AG04449 (cell line): ENCODE measurements at regions of chr11 and their contacts with region 1.

Region 1: GRCh38 chr11:126989942-126990715 is 10.4 kb downstream of the KIRREL3 start:
- DNase-seq: no peak
- H3K4me3 ChIP-seq: peak overlapping the region; percentile 44
- CTCF ChIP-seq: peak; percentile 95

Region 2: GRCh38 chr11:126607374-126607773 is 382.8 kb before region 1 on chr11:
- CTCF ChIA-PET with region 1: interaction called, 79 read pairs
- POLR2A ChIA-PET with region 1: interaction called, 3 read pairs
- DNase-seq: peak; percentile 10
- H3K4me3 ChIP-seq: no peak overlapping the region
- CTCF ChIP-seq: peak; percentile 96

Region 3: GRCh38 chr11:126764231-126764630 is 225.9 kb before region 1 on chr11:
- CTCF ChIA-PET with region 1: interaction called, 13 read pairs
- POLR2A ChIA-PET with region 1: no interaction called
- DNase-seq: no peak
- H3K4me3 ChIP-seq: no peak overlapping the region
- CTCF ChIP-seq: no peak

Region 4: GRCh38 chr11:126815111-126815510 is 175.0 kb before region 1 on chr11:
- CTCF ChIA-PET with region 1: interaction called, 15 read pairs
- POLR2A ChIA-PET with region 1: interaction called, 3 read pairs
- DNase-seq: no peak
- H3K4me3 ChIP-seq: no peak overlapping the region
- CTCF ChIP-seq: no peak

Region 5: DNA sequence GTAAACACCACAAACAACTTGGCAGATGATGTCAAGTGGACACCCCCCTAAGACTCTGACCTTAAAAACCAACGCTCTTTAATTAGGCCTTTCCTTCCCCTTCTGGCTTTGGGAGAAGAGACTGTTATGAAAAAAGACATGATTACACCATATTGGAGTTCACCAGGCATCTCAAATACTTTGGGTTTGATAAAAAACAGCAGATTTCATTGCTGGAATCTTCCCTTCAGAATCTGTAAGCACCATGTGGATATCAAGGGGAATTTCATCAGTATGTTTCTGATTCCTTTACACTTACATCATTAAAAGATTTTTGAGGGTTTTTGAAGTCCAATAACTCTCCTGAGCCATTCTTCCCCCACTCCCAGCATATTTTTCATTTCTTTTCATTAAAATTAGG is 75.2 kb before region 1 on chr11:
- CTCF ChIA-PET with region 1: interaction called, 12 read pairs
- POLR2A ChIA-PET with region 1: no interaction called
- DNase-seq: peak; percentile 88
- H3K4me3 ChIP-seq: no peak overlapping the region
- CTCF ChIP-seq: no peak

Region 6: GRCh38 chr11:127003260-127003981 is 13.3 kb after region 1 on chr11:
- CTCF ChIA-PET with region 1: interaction called, 18 read pairs
- POLR2A ChIA-PET with region 1: interaction called, 3 read pairs
- DNase-seq: no peak
- H3K4me3 ChIP-seq: peak overlapping the region; percentile 62
- CTCF ChIP-seq: peak; percentile 72